ENCODE measurements at regions of chr16 and their contacts with region 1.

Region 1: GRCh38 chr16:59593194-59593661 is 859.1 kb upstream of the GOT2 start:
- DNase-seq: peak; percentile 54
- H3K4me3 ChIP-seq: no peak overlapping the region
- H3K27ac ChIP-seq: no peak overlapping the region
- H3K4me1 ChIP-seq: no peaks in the 10 kb centered on the region
- H3K27me3 ChIP-seq: no peaks in the 10 kb centered on the region
- CTCF ChIP-seq: no peak

Region 2: DNA sequence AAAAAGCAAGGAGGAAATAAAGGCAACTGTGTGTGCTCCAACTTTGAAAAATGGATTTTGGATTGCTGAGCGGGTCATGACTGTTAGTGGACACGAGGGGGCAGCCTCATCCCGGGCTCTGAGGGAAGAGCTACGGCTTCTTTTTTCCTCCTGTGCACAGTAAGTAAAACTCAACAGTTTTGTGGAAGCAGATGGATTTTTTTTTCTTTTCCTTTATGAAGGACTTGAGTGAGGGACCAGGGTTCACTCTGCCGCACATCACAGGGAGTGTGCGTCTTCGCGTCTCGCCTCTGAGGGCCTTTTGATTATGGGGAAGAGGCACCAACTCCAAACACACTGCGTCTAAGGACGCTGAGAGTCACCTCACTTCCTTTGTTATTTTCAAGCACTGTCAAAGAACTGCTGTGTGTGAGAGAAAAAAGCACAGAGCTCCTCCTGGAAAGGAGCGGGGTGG is 778.9 kb before region 1 on chr16:
- CTCF ChIA-PET with region 1: no interaction called
- dilution Hi-C with region 1: no loop called
- in situ Hi-C with region 1: no loop called
- intact Hi-C with region 1: loop called (anchors 2 kb)
- DNase-seq: peak; percentile 26
- H3K4me3 ChIP-seq: peak overlapping the region; percentile 15 to 39 (median 34)
- H3K27ac ChIP-seq: no peak overlapping the region
- H3K4me1 ChIP-seq: peaks cover 12% of the 10 kb centered on the region
- H3K27me3 ChIP-seq: no peaks in the 10 kb centered on the region
- CTCF ChIP-seq: peak; percentile 92 to 93

Region 3: GRCh38 chr16:59848296-59848695 is 255.1 kb after region 1 on chr16:
- CTCF ChIA-PET with region 1: no interaction called
- dilution Hi-C with region 1: no loop called
- in situ Hi-C with region 1: no loop called
- intact Hi-C with region 1: no loop called
- DNase-seq: no peak
- H3K4me3 ChIP-seq: no peak overlapping the region
- H3K27ac ChIP-seq: no peak overlapping the region
- H3K4me1 ChIP-seq: no peaks in the 10 kb centered on the region
- H3K27me3 ChIP-seq: no peaks in the 10 kb centered on the region
- CTCF ChIP-seq: no peak

Measured in mammary epithelial cell (primary cell).